CD8-positive, alpha-beta T cell (primary cell): ENCODE measurements at regions of chr3 and their contacts with region 1.

Region 1: GRCh38 chr3:194761384-194761783 is 75.7 kb downstream of the FAM43A start:
- DNase-seq: no peak
- ATAC-seq: no peak
- H3K4me3 ChIP-seq: no peak overlapping the region
- H3K4me3 Mint-ChIP-seq: no peak overlapping the region
- H3K27ac ChIP-seq: no peak overlapping the region
- H3K27ac Mint-ChIP-seq: no peak overlapping the region
- H3K4me1 ChIP-seq: no peaks in the 10 kb centered on the region
- H3K4me1 Mint-ChIP-seq: no peaks in the 10 kb centered on the region
- H3K27me3 ChIP-seq: no peaks in the 10 kb centered on the region
- H3K27me3 Mint-ChIP-seq: peaks cover 10% of the 10 kb centered on the region
- CTCF ChIP-seq: no peak

Region 2: GRCh38 chr3:194777729-194778128 is 16.3 kb after region 1 on chr3:
- CTCF ChIA-PET with region 1: no interaction called
- POLR2A ChIA-PET with region 1: no interaction called
- intact Hi-C with region 1: loop called in 1 of 2 experiments (anchors 1 kb)
- DNase-seq: no peak
- ATAC-seq: no peak
- H3K4me3 ChIP-seq: no peak overlapping the region
- H3K4me3 Mint-ChIP-seq: no peak overlapping the region
- H3K27ac ChIP-seq: no peak overlapping the region
- H3K27ac Mint-ChIP-seq: no peak overlapping the region
- H3K4me1 ChIP-seq: no peaks in the 10 kb centered on the region
- H3K4me1 Mint-ChIP-seq: no peaks in the 10 kb centered on the region
- H3K27me3 ChIP-seq: no peaks in the 10 kb centered on the region
- H3K27me3 Mint-ChIP-seq: peaks cover 19% of the 10 kb centered on the region
- CTCF ChIP-seq: no peak